ENCODE measurements at regions of chrX and their contacts with region 1.

Region 1: DNA sequence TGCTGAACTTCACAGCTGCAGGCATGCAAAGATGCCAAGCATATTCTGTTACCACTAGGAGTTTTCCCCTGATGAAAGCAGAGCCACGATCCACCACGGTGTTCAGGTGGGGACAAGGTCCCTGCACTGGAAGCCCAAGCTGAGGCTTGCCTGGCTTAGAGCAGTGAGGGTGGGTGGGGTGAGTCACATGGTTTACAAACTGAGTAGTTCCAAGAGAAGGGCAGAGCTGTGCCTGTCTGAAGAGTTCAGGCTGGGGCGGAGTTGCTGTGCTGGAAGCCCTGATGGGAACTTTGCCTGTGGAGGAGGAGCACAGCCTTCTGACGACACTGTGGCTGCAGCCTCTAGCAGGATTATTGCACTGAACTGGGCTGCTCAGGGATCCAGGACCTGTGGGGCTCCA is 45.5 kb downstream of the FAM9B start:
- DNase-seq: peak in 6 of 9 donors; percentile 11 to 25 (median 18)
- ATAC-seq: no peak
- H3K4me3 ChIP-seq: no peak overlapping the region
- H3K4me3 Mint-ChIP-seq: peak overlapping the region in 3 of 10 donors; percentile 52 to 78 (median 66)
- H3K27ac ChIP-seq: peak overlapping the region; percentile 10
- H3K27ac Mint-ChIP-seq: peak overlapping the region in 8 of 9 donors; percentile 84 to 99 (median 94)
- H3K4me1 ChIP-seq: peaks cover 3 to 21% of the 10 kb centered on the region in 2 donors
- H3K4me1 Mint-ChIP-seq: peaks cover 8 to 34% (median 27%) of the 10 kb centered on the region in 7 donors
- H3K27me3 ChIP-seq: no peaks in the 10 kb centered on the region
- H3K27me3 Mint-ChIP-seq: no peaks in the 10 kb centered on the region

Region 2: GRCh38 chrX:9003041-9003440 is 14.6 kb after region 1 on chrX:
- CTCF ChIA-PET with region 1: no interaction called
- POLR2A ChIA-PET with region 1: interaction called, 10 read pairs
- intact Hi-C with region 1: no loop called
- DNase-seq: no peak
- ATAC-seq: no peak
- H3K4me3 ChIP-seq: no peak overlapping the region
- H3K4me3 Mint-ChIP-seq: peak overlapping the region in 1 of 10 donors; percentile 14
- H3K27ac ChIP-seq: no peak overlapping the region
- H3K27ac Mint-ChIP-seq: peak overlapping the region in 4 of 9 donors; percentile 39 to 79 (median 54)
- H3K4me1 ChIP-seq: no peaks in the 10 kb centered on the region
- H3K4me1 Mint-ChIP-seq: peaks cover 3 to 34% (median 19%) of the 10 kb centered on the region in 7 donors
- H3K27me3 ChIP-seq: no peaks in the 10 kb centered on the region
- H3K27me3 Mint-ChIP-seq: peaks cover 0 to 1% (median 0%) of the 10 kb centered on the region in 5 donors

Region 3: GRCh38 chrX:9102956-9103355 is 114.5 kb after region 1 on chrX:
- CTCF ChIA-PET with region 1: no interaction called
- POLR2A ChIA-PET with region 1: no interaction called
- intact Hi-C with region 1: no loop called
- DNase-seq: no peak
- ATAC-seq: no peak
- H3K4me3 ChIP-seq: no peak overlapping the region
- H3K4me3 Mint-ChIP-seq: no peak overlapping the region
- H3K27ac ChIP-seq: no peak overlapping the region
- H3K27ac Mint-ChIP-seq: peak overlapping the region in 1 of 9 donors; percentile 40
- H3K4me1 ChIP-seq: no peaks in the 10 kb centered on the region
- H3K4me1 Mint-ChIP-seq: no peaks in the 10 kb centered on the region
- H3K27me3 ChIP-seq: no peaks in the 10 kb centered on the region
- H3K27me3 Mint-ChIP-seq: no peaks in the 10 kb centered on the region

Measured in naive thymus-derived CD4-positive, alpha-beta T cell (primary cell).